CD4-positive, alpha-beta T cell (primary cell): ENCODE measurements at regions of chr15 and their contacts with region 1.

Region 1: DNA sequence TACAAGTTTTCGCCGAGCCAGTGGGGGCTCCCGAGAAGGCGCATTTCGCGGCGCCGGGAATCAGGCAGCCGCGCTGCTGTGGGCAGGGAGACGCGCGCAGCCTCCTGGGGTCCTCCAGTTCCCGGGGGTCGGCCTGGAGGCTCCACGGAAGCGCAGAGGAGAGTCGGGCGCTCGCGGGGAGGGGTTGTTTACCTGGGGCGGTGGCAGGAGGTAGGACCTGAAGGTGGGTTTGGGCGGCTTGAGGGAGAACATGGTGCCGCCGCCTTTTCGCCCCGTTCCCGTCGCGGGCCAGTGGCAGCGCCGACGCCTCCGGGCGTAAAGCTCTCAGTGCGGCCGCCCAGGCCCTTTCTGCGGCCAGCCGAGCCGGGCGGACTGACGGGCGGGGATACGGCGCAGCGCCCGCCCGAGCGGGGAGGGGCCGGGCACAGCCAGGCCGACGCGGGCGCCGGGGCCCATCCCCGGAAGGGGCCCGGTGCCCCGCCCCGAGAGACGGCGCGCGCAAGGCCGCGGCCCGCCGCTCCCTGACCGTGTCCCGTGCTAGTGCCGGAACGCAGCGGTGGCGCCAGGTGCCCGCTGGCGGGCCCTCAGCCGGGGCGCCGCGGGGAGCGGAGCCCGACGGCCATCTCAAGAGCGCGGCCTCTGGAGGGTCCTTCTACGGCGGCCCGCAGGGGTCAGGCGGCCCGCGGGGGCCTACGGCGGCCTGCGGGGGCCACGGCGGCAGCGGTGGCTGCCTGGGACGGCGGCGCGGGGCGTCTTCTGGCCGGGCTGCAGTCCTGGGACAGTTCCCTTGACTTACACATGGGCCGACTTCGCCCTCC is at the start of gene MTMR10:
- DNase-seq: peak; percentile 45 to 88 (median 66)
- ATAC-seq: peak; percentile 95
- H3K4me3 ChIP-seq: peak within 1 kb of the TSS; percentile 97
- H3K4me3 Mint-ChIP-seq: peak within 1 kb of the TSS; percentile 97
- H3K27ac ChIP-seq: peak within 1 kb of the TSS; percentile 63
- H3K27ac Mint-ChIP-seq: peak within 1 kb of the TSS; percentile 94
- H3K4me1 ChIP-seq: peaks cover 21% of the 10 kb centered on the region
- H3K4me1 Mint-ChIP-seq: peaks cover 34% of the 10 kb centered on the region
- H3K27me3 ChIP-seq: no peaks in the 10 kb centered on the region
- H3K27me3 Mint-ChIP-seq: no peaks in the 10 kb centered on the region
- CTCF ChIP-seq: no peak
- total RNA-seq, gene MTMR10: 41.2 to 42.0 TPM

Region 2: GRCh38 chr15:30903497-30904201 is 87.8 kb before region 1 on chr15 and contains the start of gene FAN1:
- CTCF ChIA-PET with region 1: no interaction called
- POLR2A ChIA-PET with region 1: interaction called, 4 read pairs
- intact Hi-C with region 1: loop called in 1 of 2 experiments (anchors 5 kb)
- DNase-seq: peak; percentile 58 to 83 (median 72)
- ATAC-seq: peak; percentile 87
- H3K4me3 ChIP-seq: peak within 1 kb of the TSS; percentile 90
- H3K4me3 Mint-ChIP-seq: peak within 1 kb of the TSS; percentile 98
- H3K27ac ChIP-seq: no peak within 1 kb of the TSS
- H3K27ac Mint-ChIP-seq: peak within 1 kb of the TSS; percentile 74
- H3K4me1 ChIP-seq: peaks cover 13% of the 10 kb centered on the region
- H3K4me1 Mint-ChIP-seq: peaks cover 44% of the 10 kb centered on the region
- H3K27me3 ChIP-seq: no peaks in the 10 kb centered on the region
- H3K27me3 Mint-ChIP-seq: no peaks in the 10 kb centered on the region
- CTCF ChIP-seq: no peak
- total RNA-seq, gene FAN1: 15.3 to 15.9 TPM

Region 3: GRCh38 chr15:31013538-31014228 is 22.2 kb after region 1 on chr15:
- CTCF ChIA-PET with region 1: no interaction called
- POLR2A ChIA-PET with region 1: interaction called, 24 read pairs
- intact Hi-C with region 1: no loop called
- DNase-seq: peak in 2 of 14 experiments; percentile 20 to 29
- ATAC-seq: peak; percentile 73
- H3K4me3 ChIP-seq: no peak overlapping the region
- H3K4me3 Mint-ChIP-seq: no peak overlapping the region
- H3K27ac ChIP-seq: no peak overlapping the region
- H3K27ac Mint-ChIP-seq: peak overlapping the region; percentile 69
- H3K4me1 ChIP-seq: no peaks in the 10 kb centered on the region
- H3K4me1 Mint-ChIP-seq: peaks cover 20% of the 10 kb centered on the region
- H3K27me3 ChIP-seq: no peaks in the 10 kb centered on the region
- H3K27me3 Mint-ChIP-seq: peaks cover 8% of the 10 kb centered on the region
- CTCF ChIP-seq: no peak

Region 4: DNA sequence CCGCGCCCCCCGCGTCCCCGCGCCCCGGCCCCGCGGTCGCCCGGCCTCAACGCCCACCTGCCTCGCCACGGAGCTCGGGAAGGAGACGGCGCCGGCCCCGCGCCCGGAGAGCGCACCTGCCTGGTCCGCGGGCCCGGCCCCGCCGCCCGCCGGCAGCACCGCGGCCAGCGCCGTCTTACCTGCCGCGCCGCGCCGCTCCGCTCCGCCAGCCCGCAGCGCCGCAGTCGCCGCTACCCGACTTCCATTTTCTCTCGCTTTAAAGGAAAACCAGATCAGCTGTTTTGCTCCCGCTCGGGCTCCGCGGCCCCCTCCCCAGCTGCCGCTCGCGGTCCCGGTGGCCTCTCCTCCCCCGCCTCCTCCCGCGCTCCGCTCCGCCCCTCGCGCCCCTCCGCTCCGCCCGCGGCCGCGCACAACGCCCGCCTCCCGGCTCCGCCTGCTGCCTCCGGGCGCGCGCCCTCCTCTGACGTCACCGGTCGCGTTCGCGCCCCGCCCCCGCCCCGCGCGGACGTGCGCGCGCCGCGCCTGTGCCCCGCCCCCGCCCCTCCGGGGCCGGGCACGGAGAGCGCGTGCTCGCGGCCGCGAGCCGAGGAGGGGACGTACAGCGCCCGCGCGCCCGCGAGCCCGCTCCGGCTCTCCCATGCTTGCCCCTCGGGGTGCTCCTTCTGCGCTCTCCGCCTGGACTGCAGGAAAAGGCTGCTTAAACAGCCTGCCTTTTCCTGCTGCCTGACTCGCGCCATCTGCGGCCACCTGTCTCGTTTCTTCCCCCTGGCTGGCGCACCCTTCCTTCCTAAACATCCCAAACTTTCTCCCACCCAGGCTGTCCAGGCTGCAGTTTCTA is 879.1 kb after region 1 on chr15:
- CTCF ChIA-PET with region 1: no interaction called
- POLR2A ChIA-PET with region 1: no interaction called
- intact Hi-C with region 1: loop called in 1 of 2 experiments (anchors 10 kb)
- DNase-seq: peak; percentile 69 to 95 (median 82)
- ATAC-seq: peak; percentile 83
- H3K4me3 ChIP-seq: peak within 1 kb of the TSS; percentile 66
- H3K4me3 Mint-ChIP-seq: peak within 1 kb of the TSS; percentile 87
- H3K27ac ChIP-seq: no peak within 1 kb of the TSS
- H3K27ac Mint-ChIP-seq: peak within 1 kb of the TSS; percentile 77
- H3K4me1 ChIP-seq: peaks cover 14% of the 10 kb centered on the region
- H3K4me1 Mint-ChIP-seq: peaks cover 23% of the 10 kb centered on the region
- H3K27me3 ChIP-seq: peaks cover 0 to 8% of the 10 kb centered on the region in 2 experiments
- H3K27me3 Mint-ChIP-seq: no peaks in the 10 kb centered on the region
- CTCF ChIP-seq: no peak